Activated naive CD4-positive, alpha-beta T cell treated with anti-CD3 and anti-CD28 coated beads for 36 hours (primary cell): ENCODE measurements at regions of chr22 and their contacts with region 1.

Region 1: GRCh38 chr22:31290494-31291471 is 1.5 kb downstream of the PIK3IP1 start:
- DNase-seq: peak; percentile 96
- H3K4me3 Mint-ChIP-seq: peak overlapping the region; percentile 98
- H3K27ac Mint-ChIP-seq: peak overlapping the region; percentile 100
- H3K4me1 Mint-ChIP-seq: peaks cover 65% of the 10 kb centered on the region
- H3K27me3 Mint-ChIP-seq: no peaks in the 10 kb centered on the region

Region 2: GRCh38 chr22:30968924-30969539 is 321.8 kb before region 1 on chr22 and contains the start of gene TUG1:
- CTCF ChIA-PET with region 1: no interaction called
- intact Hi-C with region 1: loop called (anchors 5 kb)
- DNase-seq: peak; percentile 98
- H3K4me3 Mint-ChIP-seq: peak within 1 kb of the TSS; percentile 93
- H3K27ac Mint-ChIP-seq: peak within 1 kb of the TSS; percentile 89
- H3K4me1 Mint-ChIP-seq: peaks cover 56% of the 10 kb centered on the region
- H3K27me3 Mint-ChIP-seq: no peaks in the 10 kb centered on the region
- total RNA-seq, gene TUG1: 42.3 to 44.0 TPM

Region 3: DNA sequence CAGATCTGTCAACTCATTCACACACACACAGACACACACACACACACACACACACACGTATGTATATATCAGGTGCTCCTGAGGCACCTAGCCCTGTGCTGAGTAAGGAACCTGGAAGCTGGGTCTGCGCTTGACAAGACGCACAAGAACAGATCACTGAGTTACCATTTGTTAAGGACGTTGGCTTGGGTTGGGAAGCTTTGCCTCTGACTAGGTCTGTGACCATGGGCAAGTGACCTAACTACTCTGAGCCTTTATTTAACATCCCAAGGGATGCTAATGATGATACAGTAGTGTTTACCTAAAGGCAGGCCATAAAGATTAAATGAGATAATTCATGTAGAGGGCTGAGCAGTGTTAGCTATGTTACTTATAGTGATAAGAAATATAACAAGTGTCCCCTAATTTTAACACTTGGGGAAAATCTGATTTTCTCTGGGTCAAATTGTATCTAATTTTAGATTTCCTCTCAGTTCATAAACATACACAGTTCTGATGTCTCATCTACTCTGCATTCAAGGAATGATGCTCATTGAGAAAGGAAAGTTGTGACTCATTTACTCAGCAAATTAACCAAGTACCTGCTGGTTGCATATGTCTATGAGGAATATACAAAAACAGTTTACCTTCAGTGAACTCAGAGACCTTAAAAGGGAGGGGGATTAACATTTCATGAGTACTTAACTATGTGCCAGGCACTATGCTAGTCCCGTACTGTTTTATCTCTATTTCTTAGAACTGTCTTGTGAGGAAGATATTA is 117.2 kb before region 1 on chr22:
- CTCF ChIA-PET with region 1: no interaction called
- intact Hi-C with region 1: loop called (anchors 5 kb)
- DNase-seq: no peak
- H3K4me3 Mint-ChIP-seq: peak overlapping the region; percentile 23
- H3K27ac Mint-ChIP-seq: peak overlapping the region; percentile 84
- H3K4me1 Mint-ChIP-seq: peaks cover 47% of the 10 kb centered on the region
- H3K27me3 Mint-ChIP-seq: no peaks in the 10 kb centered on the region

Region 4: DNA sequence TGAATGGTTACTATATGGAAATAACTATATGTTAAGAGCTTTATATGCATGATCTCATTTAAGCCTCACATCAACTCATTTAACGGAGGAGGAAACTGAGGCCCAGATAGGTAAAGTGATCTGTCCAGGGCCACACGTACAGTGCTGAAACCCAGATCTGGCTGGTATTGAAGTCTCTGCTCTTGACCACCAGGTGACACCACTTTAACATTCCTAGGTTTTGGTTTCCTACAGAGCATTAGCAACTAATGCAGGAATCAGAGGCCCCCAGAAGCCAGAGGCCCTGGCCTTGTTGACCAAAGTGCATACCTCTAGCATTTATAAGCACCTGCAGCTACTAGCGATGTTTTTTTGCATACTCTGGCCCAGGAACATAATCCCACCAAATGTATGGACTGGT is 91.6 kb before region 1 on chr22:
- CTCF ChIA-PET with region 1: no interaction called
- intact Hi-C with region 1: no loop called
- DNase-seq: no peak
- H3K4me3 Mint-ChIP-seq: no peak overlapping the region
- H3K27ac Mint-ChIP-seq: no peak overlapping the region
- H3K4me1 Mint-ChIP-seq: no peaks in the 10 kb centered on the region
- H3K27me3 Mint-ChIP-seq: no peaks in the 10 kb centered on the region

Region 5: DNA sequence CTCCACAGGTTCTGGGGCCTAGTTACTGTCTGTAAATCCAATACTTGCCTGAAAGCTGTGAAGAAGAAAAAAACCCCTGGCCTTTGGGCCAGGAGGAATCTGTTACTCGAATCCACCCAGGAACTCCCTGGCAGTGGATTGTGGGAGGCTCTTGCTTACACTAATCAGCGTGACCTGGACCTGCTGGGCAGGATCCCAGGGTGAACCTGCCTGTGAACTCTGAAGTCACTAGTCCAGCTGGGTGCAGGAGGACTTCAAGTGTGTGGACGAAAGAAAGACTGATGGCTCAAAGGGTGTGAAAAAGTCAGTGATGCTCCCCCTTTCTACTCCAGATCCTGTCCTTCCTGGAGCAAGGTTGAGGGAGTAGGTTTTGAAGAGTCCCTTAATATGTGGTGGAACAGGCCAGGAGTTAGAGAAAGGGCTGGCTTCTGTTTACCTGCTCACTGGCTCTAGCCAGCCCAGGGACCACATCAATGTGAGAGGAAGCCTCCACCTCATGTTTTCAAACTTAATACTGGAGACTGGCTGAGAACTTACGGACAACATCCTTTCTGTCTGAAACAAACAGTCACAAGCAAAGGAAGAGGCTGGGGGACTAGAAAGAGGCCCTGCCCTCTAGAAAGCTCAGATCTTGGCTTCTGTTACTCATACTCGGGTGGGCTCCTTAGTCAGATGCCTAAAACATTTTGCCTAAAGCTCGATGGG is 12.0 kb before region 1 on chr22:
- CTCF ChIA-PET with region 1: interaction called, 32 read pairs
- intact Hi-C with region 1: loop called (anchors 1 kb)
- DNase-seq: peak; percentile 69
- H3K4me3 Mint-ChIP-seq: peak overlapping the region; percentile 18
- H3K27ac Mint-ChIP-seq: peak overlapping the region; percentile 94
- H3K4me1 Mint-ChIP-seq: peaks cover 86% of the 10 kb centered on the region
- H3K27me3 Mint-ChIP-seq: no peaks in the 10 kb centered on the region

Region 6: GRCh38 chr22:31313366-31314147 is 22.8 kb after region 1 on chr22:
- CTCF ChIA-PET with region 1: interaction called, 18 read pairs
- intact Hi-C with region 1: loop called (anchors 1 kb)
- DNase-seq: peak; percentile 87
- H3K4me3 Mint-ChIP-seq: no peak overlapping the region
- H3K27ac Mint-ChIP-seq: peak overlapping the region; percentile 12
- H3K4me1 Mint-ChIP-seq: peaks cover 27% of the 10 kb centered on the region
- H3K27me3 Mint-ChIP-seq: no peaks in the 10 kb centered on the region

Region 7: DNA sequence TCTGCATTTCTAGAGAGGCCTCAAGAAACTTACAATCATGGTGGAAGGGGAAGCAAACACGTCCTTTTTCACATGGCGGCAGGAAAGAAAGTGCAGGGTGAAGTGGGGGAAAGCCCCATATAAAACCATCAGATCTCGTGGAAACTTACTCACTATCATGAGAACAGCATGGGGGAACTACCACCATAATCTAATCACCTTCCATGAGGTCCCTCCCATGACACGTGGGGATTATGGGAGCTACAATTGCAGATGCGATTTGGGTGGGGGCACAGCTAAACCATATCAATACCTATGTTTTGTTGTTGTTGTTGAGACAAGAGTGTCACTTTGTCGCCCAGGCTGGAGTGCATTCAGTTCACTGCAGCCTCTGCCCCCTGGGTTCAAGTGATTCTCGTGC is 235.5 kb after region 1 on chr22:
- CTCF ChIA-PET with region 1: no interaction called
- intact Hi-C with region 1: loop called (anchors 2 kb)
- DNase-seq: peak; percentile 76
- H3K4me3 Mint-ChIP-seq: no peak overlapping the region
- H3K27ac Mint-ChIP-seq: peak overlapping the region; percentile 94
- H3K4me1 Mint-ChIP-seq: peaks cover 65% of the 10 kb centered on the region
- H3K27me3 Mint-ChIP-seq: no peaks in the 10 kb centered on the region